B cell (primary cell): ENCODE measurements at regions of chr3 and their contacts with region 1.

Region 1: GRCh38 chr3:32467333-32468070 is 35.1 kb downstream of the CMTM6 start:
- DNase-seq: peak; percentile 87
- ATAC-seq: peak; percentile 78
- H3K4me3 ChIP-seq: peak overlapping the region in 4 of 5 experiments; percentile 49 to 64 (median 58)
- H3K4me3 Mint-ChIP-seq: peak overlapping the region; percentile 77
- H3K27ac ChIP-seq: peak overlapping the region; percentile 70
- H3K27ac Mint-ChIP-seq: peak overlapping the region; percentile 85
- H3K4me1 ChIP-seq: peaks cover 29 to 44% of the 10 kb centered on the region in 2 donors
- H3K4me1 Mint-ChIP-seq: peaks cover 54% of the 10 kb centered on the region
- H3K27me3 ChIP-seq: no peaks in the 10 kb centered on the region
- H3K27me3 Mint-ChIP-seq: no peaks in the 10 kb centered on the region
- CTCF ChIP-seq: peak; percentile 98

Region 2: GRCh38 chr3:32177702-32178198 is 289.8 kb before region 1 on chr3:
- CTCF ChIA-PET with region 1: interaction called, 10 read pairs
- POLR2A ChIA-PET with region 1: no interaction called
- intact Hi-C with region 1: loop called (anchors 1 kb)
- DNase-seq: peak; percentile 53
- ATAC-seq: peak; percentile 61
- H3K4me3 ChIP-seq: peak overlapping the region in 1 of 5 experiments; percentile 2
- H3K4me3 Mint-ChIP-seq: peak overlapping the region; percentile 14
- H3K27ac ChIP-seq: no peak overlapping the region
- H3K27ac Mint-ChIP-seq: no peak overlapping the region
- H3K4me1 ChIP-seq: peaks cover 4 to 15% of the 10 kb centered on the region in 2 donors
- H3K4me1 Mint-ChIP-seq: peaks cover 21% of the 10 kb centered on the region
- H3K27me3 ChIP-seq: peaks cover 0 to 9% (median 0%) of the 10 kb centered on the region in 4 experiments
- H3K27me3 Mint-ChIP-seq: peaks cover 13% of the 10 kb centered on the region
- CTCF ChIP-seq: no peak

Region 3: DNA sequence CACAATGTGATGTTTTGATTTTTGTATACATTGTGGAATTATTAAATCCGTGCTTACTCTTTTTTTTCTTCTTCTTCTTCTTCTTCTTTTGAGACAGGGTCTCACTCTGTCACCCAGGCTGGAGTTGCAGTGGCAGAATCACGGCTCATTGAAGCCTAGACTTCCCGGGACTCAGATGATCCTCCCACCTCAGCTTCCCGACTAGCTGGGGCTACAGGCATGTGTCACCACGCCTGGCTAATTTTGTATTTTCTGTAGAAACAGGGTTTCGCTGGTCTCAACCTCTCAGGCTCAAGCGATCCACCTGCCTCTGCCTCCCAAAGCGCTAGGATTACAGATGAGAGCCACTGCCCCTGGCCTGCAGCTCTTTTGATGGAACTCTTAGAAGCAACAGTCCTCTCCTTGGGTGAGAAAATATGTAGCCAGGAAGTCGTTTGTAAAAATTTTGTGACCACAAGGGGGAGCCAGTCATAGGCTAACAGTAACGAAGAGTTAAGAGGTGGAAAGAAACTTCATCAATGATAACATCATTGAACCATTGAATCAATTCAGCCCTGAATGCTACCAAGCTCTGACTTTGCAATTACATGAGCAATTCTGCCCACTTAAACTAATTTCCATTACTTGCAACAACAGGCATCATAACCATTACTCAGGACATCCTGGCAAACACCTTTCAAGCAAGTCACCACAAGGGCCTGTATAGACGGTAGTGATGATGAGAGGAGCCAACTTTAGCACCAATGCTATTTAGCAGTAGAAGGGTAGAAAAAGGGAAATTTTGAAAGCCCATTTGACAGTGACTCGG is 92.5 kb before region 1 on chr3:
- CTCF ChIA-PET with region 1: interaction called, 238 read pairs
- POLR2A ChIA-PET with region 1: interaction called, 8 read pairs
- intact Hi-C with region 1: loop called (anchors 1 kb)
- DNase-seq: peak; percentile 89
- ATAC-seq: peak; percentile 67
- H3K4me3 ChIP-seq: no peak overlapping the region
- H3K4me3 Mint-ChIP-seq: no peak overlapping the region
- H3K27ac ChIP-seq: no peak overlapping the region
- H3K27ac Mint-ChIP-seq: no peak overlapping the region
- H3K4me1 ChIP-seq: peaks cover 21 to 26% of the 10 kb centered on the region in 2 donors
- H3K4me1 Mint-ChIP-seq: peaks cover 26% of the 10 kb centered on the region
- H3K27me3 ChIP-seq: no peaks in the 10 kb centered on the region
- H3K27me3 Mint-ChIP-seq: peaks cover 4% of the 10 kb centered on the region
- CTCF ChIP-seq: peak; percentile 84

Region 4: GRCh38 chr3:32401556-32402081 is 65.9 kb before region 1 on chr3:
- CTCF ChIA-PET with region 1: interaction called, 37 read pairs
- POLR2A ChIA-PET with region 1: interaction called, 3 read pairs
- intact Hi-C with region 1: loop called (anchors 1 kb)
- DNase-seq: peak; percentile 80
- ATAC-seq: peak; percentile 70
- H3K4me3 ChIP-seq: peak overlapping the region; percentile 33 to 75 (median 55)
- H3K4me3 Mint-ChIP-seq: peak overlapping the region; percentile 88
- H3K27ac ChIP-seq: peak overlapping the region; percentile 88 to 94
- H3K27ac Mint-ChIP-seq: peak overlapping the region; percentile 96
- H3K4me1 ChIP-seq: peaks cover 41 to 58% of the 10 kb centered on the region in 2 donors
- H3K4me1 Mint-ChIP-seq: peaks cover 76% of the 10 kb centered on the region
- H3K27me3 ChIP-seq: no peaks in the 10 kb centered on the region
- H3K27me3 Mint-ChIP-seq: no peaks in the 10 kb centered on the region
- CTCF ChIP-seq: no peak

Region 5: DNA sequence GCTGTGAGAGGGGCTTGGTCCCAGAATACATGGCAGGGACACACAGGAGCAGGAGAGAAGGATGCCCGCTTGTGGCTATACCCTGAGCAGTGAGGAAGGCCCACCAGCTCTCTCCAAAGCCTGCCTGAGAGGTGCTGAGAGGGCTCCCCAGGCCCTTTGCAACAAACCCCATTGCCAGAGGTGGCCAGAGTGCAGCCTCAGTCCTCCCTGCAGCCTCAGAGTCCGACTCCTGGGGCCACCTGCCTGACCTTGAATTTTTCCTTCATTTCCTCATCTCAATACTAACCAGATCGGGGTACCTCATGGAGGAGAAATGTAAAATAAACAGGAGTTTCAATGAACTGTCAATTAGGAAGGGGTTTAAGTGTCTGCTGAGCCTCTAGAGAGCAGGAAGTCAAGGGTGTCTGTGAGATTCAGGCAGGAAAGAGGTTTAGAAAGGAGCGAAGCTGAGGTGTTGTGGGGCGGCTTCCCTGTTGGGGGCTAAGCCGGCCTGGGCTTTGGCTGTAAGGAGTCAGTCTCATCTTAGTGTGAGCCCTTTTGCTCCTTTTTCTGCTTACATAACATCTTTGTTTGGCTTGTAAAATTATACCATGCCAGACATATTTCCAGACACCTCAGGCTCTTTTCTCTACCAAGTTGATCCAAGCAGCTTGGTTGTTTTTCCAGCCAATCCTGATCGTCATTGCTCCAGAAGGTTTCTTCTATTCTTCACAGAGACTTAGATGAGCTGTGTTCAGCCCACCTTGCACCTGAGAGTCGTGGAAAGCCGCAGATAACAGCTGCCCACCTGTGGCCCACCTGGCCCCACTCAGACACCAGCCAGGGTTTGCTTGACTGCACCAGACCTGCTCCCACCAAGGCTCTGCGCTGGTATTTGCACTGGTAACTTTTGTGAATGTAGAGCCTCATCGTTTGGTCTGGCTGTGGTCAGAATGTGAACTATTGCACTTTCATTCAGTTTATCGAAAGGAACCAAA is 39.1 kb before region 1 on chr3:
- CTCF ChIA-PET with region 1: interaction called, 27 read pairs
- POLR2A ChIA-PET with region 1: no interaction called
- intact Hi-C with region 1: no loop called
- DNase-seq: peak; percentile 45
- ATAC-seq: peak; percentile 28
- H3K4me3 ChIP-seq: peak overlapping the region in 2 of 5 experiments; percentile 10 to 24
- H3K4me3 Mint-ChIP-seq: peak overlapping the region; percentile 51
- H3K27ac ChIP-seq: peak overlapping the region; percentile 52 to 65
- H3K27ac Mint-ChIP-seq: peak overlapping the region; percentile 76
- H3K4me1 ChIP-seq: peaks cover 79 to 87% of the 10 kb centered on the region in 2 donors
- H3K4me1 Mint-ChIP-seq: peaks cover 81% of the 10 kb centered on the region
- H3K27me3 ChIP-seq: no peaks in the 10 kb centered on the region
- H3K27me3 Mint-ChIP-seq: no peaks in the 10 kb centered on the region
- CTCF ChIP-seq: no peak

Region 6: GRCh38 chr3:32484436-32484835 is 16.9 kb after region 1 on chr3:
- CTCF ChIA-PET with region 1: interaction called, 62 read pairs
- POLR2A ChIA-PET with region 1: no interaction called
- intact Hi-C with region 1: loop called (anchors 2 kb)
- DNase-seq: peak; percentile 86
- ATAC-seq: peak; percentile 83
- H3K4me3 ChIP-seq: peak overlapping the region; percentile 19 to 53 (median 31)
- H3K4me3 Mint-ChIP-seq: peak overlapping the region; percentile 68
- H3K27ac ChIP-seq: peak overlapping the region; percentile 85 to 94
- H3K27ac Mint-ChIP-seq: peak overlapping the region; percentile 75
- H3K4me1 ChIP-seq: peaks cover 13 to 14% of the 10 kb centered on the region in 2 donors
- H3K4me1 Mint-ChIP-seq: peaks cover 30% of the 10 kb centered on the region
- H3K27me3 ChIP-seq: no peaks in the 10 kb centered on the region
- H3K27me3 Mint-ChIP-seq: no peaks in the 10 kb centered on the region
- CTCF ChIP-seq: no peak